ENCODE measurements at regions of chr1 and their contacts with region 1.

Region 1: GRCh38 chr1:8560611-8561544 is 243.0 kb downstream of the SLC45A1 start:
- DNase-seq: peak in 1 of 2 donors; percentile 73
- H3K4me3 ChIP-seq: no peak overlapping the region
- H3K27ac ChIP-seq: peak overlapping the region in 1 of 5 donors; percentile 18
- H3K4me1 ChIP-seq: peaks cover 0 to 32% (median 19%) of the 10 kb centered on the region in 4 donors
- H3K27me3 ChIP-seq: no peaks in the 10 kb centered on the region
- CTCF ChIP-seq: peak in 5 of 7 experiments; percentile 90 to 95 (median 93)
- EP300 ChIP-seq: no peak
- POLR2A ChIP-seq: no peak

Region 2: GRCh38 chr1:8497210-8497801 is 63.6 kb before region 1 on chr1:
- intact Hi-C with region 1: no loop called
- DNase-seq: no peak
- H3K4me3 ChIP-seq: no peak overlapping the region
- H3K27ac ChIP-seq: peak overlapping the region in 3 of 5 donors; percentile 45 to 69 (median 46)
- H3K4me1 ChIP-seq: peaks cover 0 to 23% (median 14%) of the 10 kb centered on the region in 4 donors
- H3K27me3 ChIP-seq: no peaks in the 10 kb centered on the region
- CTCF ChIP-seq: no peak
- EP300 ChIP-seq: no peak
- POLR2A ChIP-seq: no peak

Region 3: DNA sequence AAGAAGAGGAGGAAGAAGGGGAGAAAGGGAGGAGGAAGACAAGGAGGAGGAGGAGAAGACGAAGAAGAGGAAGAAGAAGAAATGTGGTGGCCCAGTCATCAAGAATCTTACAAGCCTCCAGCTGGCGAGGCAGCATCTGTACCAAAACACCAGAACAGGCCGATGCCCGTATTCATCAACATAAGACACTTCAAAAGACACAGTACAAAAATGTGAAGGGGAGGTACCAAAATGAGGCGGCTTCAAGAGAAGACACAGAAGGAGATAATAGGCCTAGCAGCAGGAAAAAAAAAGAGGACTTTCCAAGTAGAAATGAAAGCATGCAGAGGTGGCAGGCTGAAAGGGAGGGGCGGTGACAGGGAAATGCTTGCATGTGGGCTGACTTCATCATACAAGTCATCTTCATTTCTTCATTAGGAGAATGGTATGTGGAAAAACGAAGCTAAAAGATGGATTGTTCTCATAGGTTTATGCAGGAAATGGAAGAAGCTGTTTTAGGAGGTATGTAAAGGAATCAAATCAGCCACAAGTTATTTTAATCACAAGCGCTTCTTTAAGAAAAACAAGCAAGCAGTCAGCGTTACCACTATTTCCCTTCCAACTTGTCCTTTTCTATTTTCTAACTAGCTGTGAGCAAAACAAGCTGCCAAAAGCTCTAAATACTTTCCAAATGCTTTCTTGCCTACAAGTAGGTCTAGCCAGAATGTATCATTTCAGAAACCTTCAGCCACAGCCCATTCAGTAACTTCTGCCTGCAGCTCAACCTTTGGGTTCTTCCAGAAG is 50.6 kb before region 1 on chr1:
- intact Hi-C with region 1: no loop called
- DNase-seq: peak in 1 of 2 donors; percentile 66
- H3K4me3 ChIP-seq: no peak overlapping the region
- H3K27ac ChIP-seq: peak overlapping the region in 4 of 5 donors; percentile 32 to 72 (median 62)
- H3K4me1 ChIP-seq: peaks cover 0 to 31% (median 11%) of the 10 kb centered on the region in 4 donors
- H3K27me3 ChIP-seq: no peaks in the 10 kb centered on the region
- CTCF ChIP-seq: no peak
- EP300 ChIP-seq: no peak
- POLR2A ChIP-seq: no peak

Region 4: DNA sequence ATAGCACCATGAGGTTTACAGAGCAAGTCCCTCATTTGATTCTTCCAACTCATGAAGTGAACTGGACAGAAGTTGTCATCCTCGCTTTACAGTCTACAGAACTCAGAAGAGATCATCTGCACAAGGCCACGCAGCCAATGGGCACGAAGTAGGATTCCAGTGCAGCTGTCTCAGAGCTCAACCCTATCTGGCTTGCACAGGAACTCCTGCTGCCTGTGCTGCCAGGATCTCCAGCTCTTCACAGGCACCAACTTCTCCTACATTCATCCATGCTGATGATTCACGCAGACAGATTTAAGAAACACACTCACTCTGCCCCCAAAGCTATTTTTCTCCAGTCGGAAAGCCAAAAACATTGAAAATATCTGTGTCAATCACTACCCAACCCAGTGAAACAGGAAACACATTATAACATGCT is 99.5 kb after region 1 on chr1:
- intact Hi-C with region 1: loop called (anchors 10 kb)
- DNase-seq: peak in 1 of 2 donors; percentile 65
- H3K4me3 ChIP-seq: no peak overlapping the region
- H3K27ac ChIP-seq: peak overlapping the region in 4 of 5 donors; percentile 41 to 73 (median 68)
- H3K4me1 ChIP-seq: peaks cover 42 to 66% (median 56%) of the 10 kb centered on the region in 4 donors
- H3K27me3 ChIP-seq: no peaks in the 10 kb centered on the region
- CTCF ChIP-seq: no peak
- EP300 ChIP-seq: no peak
- POLR2A ChIP-seq: no peak

Measured in stomach (tissue), 19 donors.